ENCODE measurements at regions of chr14 and their contacts with region 1.

Region 1: DNA sequence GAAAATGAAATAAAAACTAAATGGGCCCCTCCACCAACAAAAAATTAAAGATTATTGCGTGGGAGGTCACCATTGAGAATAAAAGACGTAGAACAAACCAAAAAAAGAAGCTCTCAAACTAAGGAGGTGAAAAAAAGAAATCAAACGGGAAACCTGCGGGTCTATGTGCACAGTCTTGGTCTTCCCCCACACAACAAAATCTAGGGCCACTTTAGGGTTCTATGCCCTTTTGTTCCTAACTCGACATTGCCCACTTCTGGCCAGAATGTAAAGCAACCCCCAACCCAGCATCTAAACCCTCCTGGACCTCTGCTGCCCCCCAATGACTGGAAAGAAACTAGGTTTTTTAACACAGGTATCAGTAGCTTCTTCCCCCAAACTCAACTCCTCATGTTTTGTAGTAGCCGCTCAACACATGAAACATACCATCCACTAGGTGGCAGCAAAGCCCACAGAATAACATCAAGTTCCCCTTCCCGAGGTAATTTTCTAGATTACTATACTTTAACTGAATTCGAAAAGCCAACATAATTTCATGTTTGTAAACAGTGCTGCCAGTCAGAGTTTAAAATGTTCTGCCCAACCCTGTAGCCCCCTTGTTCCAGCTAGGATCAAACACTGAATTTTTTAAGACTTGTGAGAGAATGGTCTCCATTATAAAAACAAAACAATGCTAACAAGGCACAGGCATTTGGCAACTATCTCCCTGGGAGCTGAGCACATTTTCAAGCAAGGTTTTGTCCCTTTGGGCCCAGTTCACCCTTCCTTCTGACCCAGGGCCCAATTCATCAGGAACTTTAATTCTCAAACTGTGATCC is 18.7 kb downstream of the DAD1 start:
- DNase-seq: peak; percentile 61 to 98
- ATAC-seq: peak; percentile 84 to 97 (median 88)
- H3K4me3 ChIP-seq: peak overlapping the region; percentile 25
- H3K4me3 Mint-ChIP-seq: peak overlapping the region; percentile 77
- H3K27ac ChIP-seq: peak overlapping the region; percentile 82
- H3K27ac Mint-ChIP-seq: peak overlapping the region; percentile 98 to 100
- H3K4me1 ChIP-seq: peaks cover 38% of the 10 kb centered on the region
- H3K4me1 Mint-ChIP-seq: peaks cover 51% of the 10 kb centered on the region in 2 donors
- H3K27me3 ChIP-seq: no peaks in the 10 kb centered on the region
- H3K27me3 Mint-ChIP-seq: no peaks in the 10 kb centered on the region
- CTCF ChIP-seq: peak; percentile 91

Region 2: DNA sequence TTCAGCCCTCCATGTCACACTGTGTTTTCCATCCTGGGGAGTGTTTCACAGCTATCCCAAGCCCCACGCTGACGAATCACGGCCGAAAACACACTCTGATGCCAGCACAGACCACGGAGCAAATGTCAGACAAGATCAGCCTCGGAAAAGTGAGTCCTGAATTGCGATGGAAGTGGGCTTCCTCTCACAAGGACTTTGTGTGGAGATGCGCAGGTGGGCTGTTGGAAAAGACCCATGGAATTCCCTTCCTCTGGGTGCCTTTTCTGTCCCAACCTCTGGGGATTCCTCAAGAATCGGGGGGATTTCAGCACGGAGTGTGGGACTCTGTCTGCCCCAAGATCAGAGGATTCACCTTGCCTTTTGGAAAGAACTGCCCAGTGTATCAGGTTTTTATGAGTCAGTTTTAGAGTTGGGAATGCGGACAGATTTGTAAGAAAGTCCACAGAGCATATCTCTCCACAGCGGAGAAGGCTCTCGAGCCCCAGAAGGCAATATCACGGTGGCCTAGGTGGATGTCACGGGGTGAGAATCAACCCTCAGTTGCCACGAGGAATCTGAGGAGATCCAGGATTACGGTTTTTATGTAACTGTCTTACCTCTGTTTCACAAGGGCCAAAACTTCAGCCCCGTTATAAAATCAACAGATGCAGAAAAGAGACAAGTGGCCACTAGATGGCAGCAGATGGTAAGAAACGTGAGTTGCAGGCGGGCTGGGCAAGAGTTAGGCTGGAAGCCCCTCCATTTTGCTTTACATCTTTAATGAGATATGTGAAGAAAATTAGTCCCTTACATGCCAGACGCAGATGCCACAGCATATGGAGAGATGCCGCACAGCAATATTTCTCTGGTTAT is 183.2 kb before region 1 on chr14:
- intact Hi-C with region 1: loop called (anchors 1 kb)
- DNase-seq: peak; percentile 58 to 64
- ATAC-seq: peak; percentile 59 to 69 (median 63)
- H3K4me3 ChIP-seq: no peak overlapping the region
- H3K4me3 Mint-ChIP-seq: no peak overlapping the region
- H3K27ac ChIP-seq: no peak overlapping the region
- H3K27ac Mint-ChIP-seq: peak overlapping the region; percentile 73 to 77
- H3K4me1 ChIP-seq: peaks cover 33% of the 10 kb centered on the region
- H3K4me1 Mint-ChIP-seq: peaks cover 36% of the 10 kb centered on the region in 2 donors
- H3K27me3 ChIP-seq: no peaks in the 10 kb centered on the region
- H3K27me3 Mint-ChIP-seq: no peaks in the 10 kb centered on the region
- CTCF ChIP-seq: peak; percentile 89

Region 3: DNA sequence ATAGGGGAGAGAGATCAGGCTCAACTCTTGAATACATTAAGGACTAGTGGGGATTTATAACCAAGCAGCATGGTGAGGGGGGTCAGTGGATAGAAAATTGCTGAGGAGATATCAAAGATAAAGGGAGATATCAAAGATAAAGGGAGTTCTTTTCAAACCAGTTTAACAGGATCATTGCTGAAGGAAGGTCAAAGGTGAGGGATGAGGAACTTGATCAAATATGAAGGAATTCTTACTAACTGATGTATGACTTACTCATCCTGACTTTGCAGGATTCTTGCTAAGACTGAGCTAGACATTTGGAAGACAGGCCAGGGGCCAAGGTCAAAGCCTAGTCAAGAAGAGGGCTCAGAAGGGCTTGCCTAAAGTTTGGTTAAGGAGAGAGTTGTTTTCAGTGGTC is 32.5 kb after region 1 on chr14:
- intact Hi-C with region 1: no loop called
- DNase-seq: no peak
- ATAC-seq: no peak
- H3K4me3 ChIP-seq: no peak overlapping the region
- H3K4me3 Mint-ChIP-seq: no peak overlapping the region
- H3K27ac ChIP-seq: no peak overlapping the region
- H3K27ac Mint-ChIP-seq: no peak overlapping the region
- H3K4me1 ChIP-seq: peaks cover 11% of the 10 kb centered on the region
- H3K4me1 Mint-ChIP-seq: peaks cover 36 to 38% of the 10 kb centered on the region in 2 donors
- H3K27me3 ChIP-seq: no peaks in the 10 kb centered on the region
- H3K27me3 Mint-ChIP-seq: no peaks in the 10 kb centered on the region
- CTCF ChIP-seq: no peak

Region 4: DNA sequence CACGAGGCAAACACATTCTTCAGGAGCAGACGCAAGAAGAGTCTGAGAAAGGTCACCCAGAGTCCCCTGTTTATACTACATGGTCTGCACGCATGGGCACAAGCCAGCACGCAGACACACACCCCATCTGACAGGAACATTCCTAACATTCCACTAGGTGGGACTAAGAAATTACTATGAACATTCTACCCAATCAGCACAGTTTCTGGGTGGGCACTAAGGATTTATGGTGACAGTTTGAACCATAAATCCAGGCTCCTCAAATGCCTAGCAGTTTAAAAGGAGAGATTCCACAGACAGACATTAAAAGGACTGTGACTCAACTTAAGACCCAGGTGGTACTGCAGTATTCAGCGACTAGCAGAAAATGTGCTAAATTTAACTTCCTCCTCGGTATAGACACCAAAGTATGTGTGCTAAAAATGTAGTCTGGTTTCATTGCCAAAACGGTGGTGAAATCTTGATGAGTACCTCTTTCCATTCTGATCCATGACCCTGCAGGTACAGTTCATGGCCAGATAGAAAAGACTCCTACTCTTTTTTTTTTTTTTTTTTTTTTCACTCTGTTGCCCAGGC is 44.0 kb after region 1 on chr14:
- intact Hi-C with region 1: no loop called
- DNase-seq: no peak
- ATAC-seq: no peak
- H3K4me3 ChIP-seq: no peak overlapping the region
- H3K4me3 Mint-ChIP-seq: no peak overlapping the region
- H3K27ac ChIP-seq: no peak overlapping the region
- H3K27ac Mint-ChIP-seq: no peak overlapping the region
- H3K4me1 ChIP-seq: no peaks in the 10 kb centered on the region
- H3K4me1 Mint-ChIP-seq: no peaks in the 10 kb centered on the region
- H3K27me3 ChIP-seq: no peaks in the 10 kb centered on the region
- H3K27me3 Mint-ChIP-seq: no peaks in the 10 kb centered on the region
- CTCF ChIP-seq: no peak

Region 5: DNA sequence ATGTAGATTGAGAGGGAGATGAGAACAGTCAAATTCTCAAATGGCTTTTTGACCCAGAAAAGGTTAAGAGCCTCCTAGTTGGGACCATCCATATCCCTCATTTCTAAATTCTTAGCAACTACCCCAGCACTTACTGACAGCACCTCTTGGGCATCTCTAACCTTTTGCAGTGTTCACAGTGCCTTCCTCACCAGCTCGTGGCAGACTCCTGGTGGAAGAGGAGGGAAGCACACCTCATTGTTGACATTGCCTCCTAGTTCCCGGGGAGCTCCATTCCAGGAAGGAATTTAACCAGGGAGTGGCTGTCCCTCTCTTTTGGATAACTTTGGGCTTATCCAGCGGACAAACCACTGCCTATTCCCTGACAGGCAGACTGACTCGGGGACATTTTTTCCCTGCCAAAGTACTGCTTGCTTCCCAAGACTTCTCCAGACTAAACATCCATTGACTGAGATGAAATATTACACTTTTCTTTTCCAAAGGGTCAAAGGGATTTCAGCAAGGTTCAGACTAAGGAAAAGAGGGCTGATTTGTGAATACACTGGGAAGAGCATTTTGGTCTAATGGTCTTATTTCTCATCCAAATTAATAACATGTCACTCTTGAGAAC is 82.8 kb after region 1 on chr14:
- intact Hi-C with region 1: loop called (anchors 1 kb)
- DNase-seq: peak; percentile 20 to 75
- ATAC-seq: peak; percentile 60 to 77 (median 76)
- H3K4me3 ChIP-seq: no peak overlapping the region
- H3K4me3 Mint-ChIP-seq: no peak overlapping the region
- H3K27ac ChIP-seq: no peak overlapping the region
- H3K27ac Mint-ChIP-seq: no peak overlapping the region
- H3K4me1 ChIP-seq: no peaks in the 10 kb centered on the region
- H3K4me1 Mint-ChIP-seq: no peaks in the 10 kb centered on the region
- H3K27me3 ChIP-seq: no peaks in the 10 kb centered on the region
- H3K27me3 Mint-ChIP-seq: peaks cover 2 to 10% of the 10 kb centered on the region in 2 donors
- CTCF ChIP-seq: peak; percentile 63

Region 6: DNA sequence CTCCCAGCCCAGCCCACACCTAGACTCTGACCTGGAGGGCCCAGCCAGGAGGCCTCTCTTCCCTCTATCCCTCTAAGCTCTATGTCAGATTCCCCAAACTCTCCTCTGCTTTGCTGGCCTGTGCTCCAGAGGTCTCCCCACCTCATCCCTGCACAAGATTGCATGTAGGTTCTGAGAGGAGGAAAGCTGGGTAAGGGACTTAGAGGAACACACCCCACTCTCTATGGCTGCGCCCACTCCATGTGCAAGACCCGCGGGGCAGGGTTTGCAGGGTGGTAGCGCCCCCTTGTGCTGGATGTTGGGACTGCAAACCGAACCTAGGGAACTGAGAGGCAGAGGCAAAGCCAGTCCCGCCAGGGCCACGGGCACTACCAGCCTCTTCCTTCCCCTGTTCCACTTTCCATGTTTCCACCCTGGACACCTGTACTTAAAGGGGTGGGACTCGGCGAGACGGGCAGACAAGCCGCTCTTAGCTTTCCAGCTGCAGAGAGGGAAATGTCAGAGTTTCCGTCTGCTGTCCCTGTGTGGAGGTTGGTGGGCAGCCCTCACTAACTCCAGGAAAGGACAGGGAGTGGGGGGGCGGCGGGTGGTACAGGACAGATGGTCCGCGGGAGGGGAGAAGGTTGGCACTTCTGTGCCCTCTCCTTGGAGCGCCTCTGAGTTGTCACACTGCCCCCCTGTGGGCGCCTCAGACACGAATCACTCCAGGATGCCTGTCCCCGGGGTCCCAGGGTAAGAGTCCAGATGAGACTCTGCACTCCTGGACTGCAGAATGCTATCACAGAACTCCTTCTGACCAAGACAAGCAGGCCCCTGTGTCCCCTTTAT is 282.8 kb after region 1 on chr14:
- intact Hi-C with region 1: loop called (anchors 1 kb)
- DNase-seq: peak; percentile 89 to 90
- ATAC-seq: peak; percentile 93 to 95 (median 94)
- H3K4me3 ChIP-seq: peak overlapping the region; percentile 45
- H3K4me3 Mint-ChIP-seq: peak overlapping the region; percentile 75
- H3K27ac ChIP-seq: no peak overlapping the region
- H3K27ac Mint-ChIP-seq: peak overlapping the region in 1 of 2 donors; percentile 78
- H3K4me1 ChIP-seq: peaks cover 21% of the 10 kb centered on the region
- H3K4me1 Mint-ChIP-seq: peaks cover 4 to 9% of the 10 kb centered on the region in 2 donors
- H3K27me3 ChIP-seq: peaks cover 29% of the 10 kb centered on the region
- H3K27me3 Mint-ChIP-seq: peaks cover 24 to 29% of the 10 kb centered on the region in 2 donors
- CTCF ChIP-seq: peak; percentile 97

Region 7: GRCh38 chr14:22918804-22919600 is 348.7 kb after region 1 on chr14 and contains the start of gene RBM23:
- intact Hi-C with region 1: loop called (anchors 5 kb)
- DNase-seq: peak; percentile 99 to 100
- ATAC-seq: peak; percentile 86 to 97 (median 91)
- H3K4me3 ChIP-seq: peak within 1 kb of the TSS; percentile 64
- H3K4me3 Mint-ChIP-seq: peak within 1 kb of the TSS; percentile 99
- H3K27ac ChIP-seq: peak within 1 kb of the TSS; percentile 96
- H3K27ac Mint-ChIP-seq: peak within 1 kb of the TSS; percentile 100
- H3K4me1 ChIP-seq: peaks cover 21% of the 10 kb centered on the region
- H3K4me1 Mint-ChIP-seq: peaks cover 25 to 30% of the 10 kb centered on the region in 2 donors
- H3K27me3 ChIP-seq: no peaks in the 10 kb centered on the region
- H3K27me3 Mint-ChIP-seq: peaks cover 0 to 3% of the 10 kb centered on the region in 2 donors
- CTCF ChIP-seq: no peak
- total RNA-seq, gene RBM23: 86.4 to 120 (median 108) TPM

Region 8: DNA sequence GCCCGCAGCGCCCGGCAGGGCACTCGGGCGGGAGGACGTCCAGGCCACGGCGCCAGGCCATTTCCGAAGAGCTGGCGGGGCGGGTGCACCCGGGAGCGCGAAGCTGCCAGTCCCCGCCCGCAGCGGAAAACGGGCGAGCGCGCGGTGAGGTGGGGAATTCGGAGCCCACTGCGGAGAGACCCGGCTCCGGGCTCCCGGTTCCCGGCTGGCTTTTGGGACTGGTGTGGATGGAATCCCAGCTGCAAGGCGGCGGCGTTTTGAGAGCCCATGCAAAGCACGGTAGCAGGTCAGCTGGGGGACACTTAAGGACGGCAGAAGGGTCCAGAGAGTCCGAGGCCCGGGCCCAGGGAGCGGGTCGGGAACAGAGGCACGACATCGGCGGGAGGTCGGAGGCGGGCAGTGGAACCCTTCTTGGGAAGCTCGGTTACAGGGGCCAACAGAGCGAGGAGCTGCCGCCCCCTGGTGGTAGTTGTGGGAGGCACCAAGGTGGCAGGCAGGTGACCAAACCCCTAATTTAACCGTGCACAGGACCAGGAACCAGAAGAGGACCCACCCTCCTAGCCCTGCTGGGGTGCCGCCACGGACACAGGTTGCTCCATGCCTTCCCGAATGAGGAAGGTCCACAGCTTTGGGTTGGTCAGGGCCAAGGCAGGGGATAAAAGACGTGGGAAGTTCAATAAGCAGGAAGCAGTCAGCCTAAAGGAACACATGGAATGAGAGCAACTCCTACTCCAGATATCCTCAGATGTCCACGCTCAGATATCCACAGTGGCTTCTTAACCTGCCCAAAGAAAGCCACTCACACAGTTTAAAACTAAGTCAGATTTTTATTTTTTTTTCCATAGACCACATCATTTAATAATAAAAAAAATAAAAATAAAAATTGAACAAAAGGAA is 487.7 kb after region 1 on chr14:
- intact Hi-C with region 1: loop called (anchors 5 kb)
- DNase-seq: peak; percentile 86 to 94
- ATAC-seq: peak; percentile 72 to 83 (median 73)
- H3K4me3 ChIP-seq: peak overlapping the region; percentile 58
- H3K4me3 Mint-ChIP-seq: peak overlapping the region; percentile 82
- H3K27ac ChIP-seq: no peak overlapping the region
- H3K27ac Mint-ChIP-seq: peak overlapping the region; percentile 60 to 74
- H3K4me1 ChIP-seq: peaks cover 18% of the 10 kb centered on the region
- H3K4me1 Mint-ChIP-seq: peaks cover 17 to 27% of the 10 kb centered on the region in 2 donors
- H3K27me3 ChIP-seq: no peaks in the 10 kb centered on the region
- H3K27me3 Mint-ChIP-seq: peaks cover 0 to 3% of the 10 kb centered on the region in 2 donors
- CTCF ChIP-seq: peak; percentile 98

Measured in natural killer cell (primary cell).